SK-N-SH (cell line): ENCODE measurements at regions of chr4 and their contacts with region 1.

Region 1: GRCh38 chr4:8688041-8688937 is 95.7 kb downstream of the CPZ start:
- DNase-seq: peak; percentile 86
- H3K4me3 ChIP-seq: no peak overlapping the region
- H3K27ac ChIP-seq: no peak overlapping the region
- H3K4me1 ChIP-seq: peaks cover 0 to 2% of the 10 kb centered on the region in 2 experiments; a peak in 1 of 4 replicates
- H3K27me3 ChIP-seq: no peaks in the 10 kb centered on the region
- CTCF ChIP-seq: peak; percentile 17; the same call in 1 of the 2 replicates
- EP300 ChIP-seq: no peak
- RAD21 ChIP-seq: peak; percentile 75

Region 2: GRCh38 chr4:8705161-8706145 is 17.2 kb after region 1 on chr4:
- CTCF ChIA-PET with region 1: interaction called, 14 read pairs
- POLR2A ChIA-PET with region 1: no interaction called
- DNase-seq: no peak
- H3K4me3 ChIP-seq: no peak overlapping the region
- H3K27ac ChIP-seq: no peak overlapping the region; a peak in 1 of 4 replicates
- H3K4me1 ChIP-seq: peaks cover 0 to 30% of the 10 kb centered on the region in 2 experiments; a peak in 1 of 4 replicates
- H3K27me3 ChIP-seq: no peaks in the 10 kb centered on the region
- CTCF ChIP-seq: no peak
- EP300 ChIP-seq: no peak
- RAD21 ChIP-seq: no peak

Region 3: DNA sequence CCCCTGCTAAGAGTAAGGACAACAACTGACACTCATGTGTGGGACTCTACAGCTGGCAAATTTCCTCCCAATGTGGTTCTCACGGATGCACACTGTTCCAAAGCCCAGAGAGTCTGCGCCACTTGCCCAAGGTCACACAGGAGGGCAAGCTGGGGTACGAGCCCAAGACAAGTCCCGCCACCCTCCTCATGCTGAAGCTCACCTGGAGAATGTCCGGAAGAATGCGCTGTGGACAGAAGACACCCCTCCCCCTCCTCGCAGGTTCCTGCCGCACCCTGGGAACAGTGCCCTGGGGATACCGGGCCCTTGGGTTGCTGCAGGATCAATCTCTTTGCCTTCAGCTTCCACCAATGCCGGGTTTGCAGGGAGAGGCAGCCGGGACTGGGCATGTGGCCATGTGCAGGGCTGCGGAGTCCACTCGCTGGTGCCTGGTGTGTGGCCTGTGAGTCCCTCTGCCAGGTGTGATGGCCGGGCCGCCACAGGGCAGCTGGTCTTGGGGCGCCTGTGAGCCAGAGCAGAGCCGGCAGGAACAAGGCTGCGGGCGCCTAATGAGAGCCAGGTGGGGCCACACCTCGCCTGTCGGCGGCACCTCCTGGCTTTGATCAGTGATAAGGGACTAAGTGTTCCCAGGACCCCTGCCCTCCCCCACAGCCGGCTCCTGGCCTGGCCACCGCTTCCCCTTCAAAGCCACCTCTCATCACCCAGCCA is 36.7 kb after region 1 on chr4:
- CTCF ChIA-PET with region 1: interaction called, 14 read pairs
- POLR2A ChIA-PET with region 1: no interaction called
- DNase-seq: peak; percentile 89
- H3K4me3 ChIP-seq: no peak overlapping the region
- H3K27ac ChIP-seq: peak overlapping the region in 1 of 2 experiments; percentile 64; a peak in 2 of 4 replicates
- H3K4me1 ChIP-seq: peaks cover 0 to 19% of the 10 kb centered on the region in 2 experiments; a peak in 1 of 4 replicates
- H3K27me3 ChIP-seq: no peaks in the 10 kb centered on the region
- CTCF ChIP-seq: no peak
- EP300 ChIP-seq: peak in 1 of 2 experiments; percentile 67; a peak in 2 of 4 replicates
- RAD21 ChIP-seq: no peak

Region 4: DNA sequence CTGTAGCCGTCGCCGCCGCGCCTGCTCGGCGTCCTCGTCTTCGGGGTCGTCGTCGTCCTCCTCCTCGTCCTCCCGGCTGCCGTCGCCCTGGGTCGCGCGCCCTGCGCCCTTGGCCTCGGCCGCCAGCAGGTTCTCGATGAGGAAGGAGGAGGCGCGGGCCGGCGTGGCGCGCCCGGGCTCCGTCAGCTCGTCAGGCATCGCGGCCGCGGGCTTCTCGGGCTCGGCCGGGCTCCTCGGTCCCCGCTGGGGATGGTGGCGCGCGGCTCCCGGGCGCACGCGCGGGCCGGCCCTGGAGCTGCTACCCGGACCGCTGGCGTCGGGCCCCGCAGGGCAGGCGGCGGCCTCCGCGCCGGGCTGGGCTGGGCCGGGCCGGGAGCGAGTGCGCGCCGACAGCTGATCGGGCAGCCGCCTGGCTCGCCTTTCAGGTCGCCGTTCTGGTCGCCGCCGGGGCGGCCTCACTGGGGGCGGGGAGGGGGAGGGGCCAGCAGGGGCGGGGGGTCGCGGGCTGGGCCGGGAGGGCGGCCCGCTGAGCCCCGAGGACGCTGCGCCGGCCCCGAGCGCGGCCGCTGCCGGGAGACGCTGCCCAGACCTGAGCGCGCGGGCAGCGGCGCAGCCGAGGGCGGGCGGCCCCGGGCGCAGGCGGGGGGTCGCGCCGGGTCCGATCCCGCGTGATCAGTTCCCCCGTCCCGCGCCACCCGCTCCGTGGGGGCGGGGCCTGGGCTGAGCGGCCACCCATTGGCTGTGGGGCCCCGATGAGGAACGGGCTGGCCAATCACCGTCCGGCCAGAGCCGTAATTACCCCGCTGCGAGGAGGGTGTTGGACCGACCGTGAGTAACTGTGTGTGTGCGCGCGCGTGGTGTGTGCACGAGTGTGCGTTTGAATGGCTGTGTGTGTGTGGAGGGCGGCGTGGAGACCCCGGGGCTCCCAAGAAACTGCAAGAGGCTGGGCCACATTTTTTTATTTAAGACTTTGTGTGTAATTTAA is 183.4 kb after region 1 on chr4 and contains the start of gene HMX1:
- CTCF ChIA-PET with region 1: interaction called, 11 read pairs
- POLR2A ChIA-PET with region 1: no interaction called
- DNase-seq: peak; percentile 100
- H3K4me3 ChIP-seq: peak within 1 kb of the TSS in 1 of 2 experiments; percentile 55; a peak in 2 of 4 replicates
- H3K27ac ChIP-seq: peak within 1 kb of the TSS in 1 of 2 experiments; percentile 68; a peak in 2 of 4 replicates
- H3K4me1 ChIP-seq: peaks cover 0 to 19% of the 10 kb centered on the region in 2 experiments; a peak in 1 of 4 replicates
- H3K27me3 ChIP-seq: no peaks in the 10 kb centered on the region
- CTCF ChIP-seq: no peak
- EP300 ChIP-seq: no peak
- RAD21 ChIP-seq: no peak
- polyA plus RNA-seq, gene HMX1: 0.11 and 0.20 TPM in 2 replicates

Region 5: DNA sequence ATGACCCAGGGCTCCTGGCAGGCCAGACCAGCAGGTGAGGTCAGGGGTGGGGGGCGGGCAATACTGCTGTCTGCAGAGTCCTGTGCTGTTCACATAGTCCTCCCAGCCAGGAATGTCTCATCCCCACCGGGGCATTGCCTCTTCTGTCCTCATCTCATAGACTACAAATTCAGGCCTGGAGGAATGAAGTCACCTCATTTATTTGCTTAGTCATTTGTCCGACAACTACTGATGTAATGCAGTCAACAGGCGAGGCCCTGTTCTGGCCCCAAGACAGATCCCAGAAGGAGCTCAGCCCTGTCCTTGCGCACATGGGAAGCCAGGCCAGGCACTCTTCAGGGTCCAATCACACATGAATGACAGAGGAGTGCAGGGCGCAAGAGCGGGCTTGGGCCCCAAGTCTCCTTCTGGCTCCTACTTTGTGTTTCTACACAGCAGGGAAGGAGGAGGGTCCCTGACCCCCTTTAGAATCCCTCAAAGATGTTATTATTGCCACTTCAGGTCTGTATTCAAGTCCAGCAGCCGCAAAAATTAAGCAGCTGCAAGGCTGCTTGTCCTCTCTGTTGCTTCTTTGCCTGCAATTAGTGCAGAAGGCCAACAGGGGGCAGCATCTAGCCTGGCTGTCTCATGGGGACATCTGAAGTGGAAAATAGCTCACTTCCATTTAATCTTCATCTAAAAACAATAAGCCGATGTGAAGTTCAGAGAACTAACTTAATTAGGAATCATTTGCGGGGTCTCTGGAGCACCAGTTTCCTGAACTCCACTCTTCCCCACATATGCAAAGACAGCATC is 198.5 kb after region 1 on chr4:
- CTCF ChIA-PET with region 1: interaction called, 107 read pairs
- POLR2A ChIA-PET with region 1: no interaction called
- DNase-seq: no peak
- H3K4me3 ChIP-seq: no peak overlapping the region
- H3K27ac ChIP-seq: no peak overlapping the region
- H3K4me1 ChIP-seq: no peaks in the 10 kb centered on the region
- H3K27me3 ChIP-seq: no peaks in the 10 kb centered on the region
- CTCF ChIP-seq: peak; percentile 20; the same call in 1 of the 2 replicates
- EP300 ChIP-seq: no peak
- RAD21 ChIP-seq: no peak

Region 6: GRCh38 chr4:8897251-8898167 is 209.2 kb after region 1 on chr4:
- CTCF ChIA-PET with region 1: interaction called, 11 read pairs
- POLR2A ChIA-PET with region 1: no interaction called
- DNase-seq: no peak
- H3K4me3 ChIP-seq: no peak overlapping the region
- H3K27ac ChIP-seq: no peak overlapping the region
- H3K4me1 ChIP-seq: no peaks in the 10 kb centered on the region
- H3K27me3 ChIP-seq: no peaks in the 10 kb centered on the region
- CTCF ChIP-seq: no peak
- EP300 ChIP-seq: no peak
- RAD21 ChIP-seq: no peak